ENCODE measurements at regions of chr6 and their contacts with region 1.

Region 1: GRCh38 chr6:26103770-26104456 is 16.7 kb downstream of the HFE start:
- DNase-seq: peak; percentile 96
- H3K4me3 Mint-ChIP-seq: peak overlapping the region; percentile 75
- H3K27ac Mint-ChIP-seq: peak overlapping the region; percentile 92
- H3K4me1 Mint-ChIP-seq: peaks cover 11% of the 10 kb centered on the region
- H3K27me3 Mint-ChIP-seq: no peaks in the 10 kb centered on the region
- CTCF ChIP-seq: peak; percentile 41

Region 2: DNA sequence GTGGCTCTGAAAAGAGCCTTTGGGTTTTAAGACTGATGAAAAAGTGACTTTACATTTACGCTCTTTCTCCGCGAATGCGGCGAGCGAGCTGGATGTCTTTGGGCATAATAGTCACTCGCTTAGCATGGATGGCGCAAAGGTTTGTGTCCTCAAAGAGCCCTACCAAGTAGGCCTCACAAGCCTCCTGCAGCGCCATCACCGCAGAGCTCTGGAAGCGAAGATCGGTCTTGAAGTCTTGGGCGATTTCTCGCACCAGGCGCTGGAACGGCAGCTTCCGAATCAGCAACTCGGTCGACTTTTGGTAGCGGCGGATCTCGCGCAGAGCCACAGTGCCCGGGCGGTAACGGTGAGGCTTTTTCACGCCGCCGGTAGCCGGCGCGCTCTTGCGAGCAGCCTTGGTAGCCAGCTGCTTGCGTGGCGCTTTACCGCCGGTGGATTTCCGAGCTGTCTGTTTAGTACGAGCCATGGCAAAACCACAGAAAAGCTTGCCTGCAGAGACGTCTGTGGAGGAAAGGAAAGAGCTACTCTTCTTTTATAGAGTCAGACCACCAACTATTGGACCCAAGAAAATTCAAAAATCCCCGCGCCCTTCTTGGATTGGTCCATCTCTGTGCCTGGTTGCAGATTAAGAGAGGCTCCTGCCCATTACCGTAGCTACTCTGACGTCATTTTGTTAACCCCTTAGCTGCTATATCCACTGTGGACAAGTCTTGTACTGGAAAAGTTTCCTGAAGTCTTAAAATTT is 72.1 kb before region 1 on chr6:
- CTCF ChIA-PET with region 1: interaction called, 6 read pairs
- POLR2A ChIA-PET with region 1: interaction called, 51 read pairs
- intact Hi-C with region 1: no loop called
- DNase-seq: peak; percentile 99
- H3K4me3 Mint-ChIP-seq: peak overlapping the region; percentile 81
- H3K27ac Mint-ChIP-seq: peak overlapping the region; percentile 97
- H3K4me1 Mint-ChIP-seq: peaks cover 25% of the 10 kb centered on the region
- H3K27me3 Mint-ChIP-seq: no peaks in the 10 kb centered on the region
- CTCF ChIP-seq: peak; percentile 12

Region 3: GRCh38 chr6:26054857-26055669 is 48.9 kb before region 1 on chr6:
- CTCF ChIA-PET with region 1: interaction called, 425 read pairs
- POLR2A ChIA-PET with region 1: interaction called, 235 read pairs
- intact Hi-C with region 1: no loop called
- DNase-seq: peak; percentile 96
- H3K4me3 Mint-ChIP-seq: peak overlapping the region; percentile 74
- H3K27ac Mint-ChIP-seq: peak overlapping the region; percentile 92
- H3K4me1 Mint-ChIP-seq: no peaks in the 10 kb centered on the region
- H3K27me3 Mint-ChIP-seq: no peaks in the 10 kb centered on the region
- CTCF ChIP-seq: no peak

Region 4: DNA sequence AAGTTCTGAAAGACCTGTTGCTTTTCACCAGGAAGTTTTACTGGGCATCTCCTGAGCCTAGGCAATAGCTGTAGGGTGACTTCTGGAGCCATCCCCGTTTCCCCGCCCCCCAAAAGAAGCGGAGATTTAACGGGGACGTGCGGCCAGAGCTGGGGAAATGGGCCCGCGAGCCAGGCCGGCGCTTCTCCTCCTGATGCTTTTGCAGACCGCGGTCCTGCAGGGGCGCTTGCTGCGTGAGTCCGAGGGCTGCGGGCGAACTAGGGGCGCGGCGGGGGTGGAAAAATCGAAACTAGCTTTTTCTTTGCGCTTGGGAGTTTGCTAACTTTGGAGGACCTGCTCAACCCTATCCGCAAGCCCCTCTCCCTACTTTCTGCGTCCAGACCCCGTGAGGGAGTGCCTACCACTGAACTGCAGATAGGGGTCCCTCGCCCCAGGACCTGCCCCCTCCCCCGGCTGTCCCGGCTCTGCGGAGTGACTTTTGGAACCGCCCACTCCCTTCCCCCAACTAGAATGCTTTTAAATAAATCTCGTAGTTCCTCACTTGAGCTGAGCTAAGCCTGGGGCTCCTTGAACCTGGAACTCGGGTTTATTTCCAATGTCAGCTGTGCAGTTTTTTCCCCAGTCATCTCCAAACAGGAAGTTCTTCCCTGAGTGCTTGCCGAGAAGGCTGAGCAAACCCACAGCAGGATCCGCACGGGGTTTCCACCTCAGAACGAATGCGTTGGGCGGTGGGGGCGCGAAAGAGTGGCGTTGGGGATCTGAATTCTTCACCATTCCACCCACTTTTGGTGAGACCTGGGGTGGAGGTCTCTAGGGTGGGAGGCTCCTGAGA is 16.4 kb before region 1 on chr6 and contains the start of gene HFE:
- CTCF ChIA-PET with region 1: interaction called, 81 read pairs
- POLR2A ChIA-PET with region 1: interaction called, 54 read pairs
- intact Hi-C with region 1: no loop called
- DNase-seq: peak; percentile 53
- H3K4me3 Mint-ChIP-seq: peak within 1 kb of the TSS; percentile 88
- H3K27ac Mint-ChIP-seq: peak within 1 kb of the TSS; percentile 92
- H3K4me1 Mint-ChIP-seq: peaks cover 10% of the 10 kb centered on the region
- H3K27me3 Mint-ChIP-seq: no peaks in the 10 kb centered on the region
- CTCF ChIP-seq: no peak
- total RNA-seq, gene HFE: 2.8 and 5.2 TPM in 2 replicates

Region 5: DNA sequence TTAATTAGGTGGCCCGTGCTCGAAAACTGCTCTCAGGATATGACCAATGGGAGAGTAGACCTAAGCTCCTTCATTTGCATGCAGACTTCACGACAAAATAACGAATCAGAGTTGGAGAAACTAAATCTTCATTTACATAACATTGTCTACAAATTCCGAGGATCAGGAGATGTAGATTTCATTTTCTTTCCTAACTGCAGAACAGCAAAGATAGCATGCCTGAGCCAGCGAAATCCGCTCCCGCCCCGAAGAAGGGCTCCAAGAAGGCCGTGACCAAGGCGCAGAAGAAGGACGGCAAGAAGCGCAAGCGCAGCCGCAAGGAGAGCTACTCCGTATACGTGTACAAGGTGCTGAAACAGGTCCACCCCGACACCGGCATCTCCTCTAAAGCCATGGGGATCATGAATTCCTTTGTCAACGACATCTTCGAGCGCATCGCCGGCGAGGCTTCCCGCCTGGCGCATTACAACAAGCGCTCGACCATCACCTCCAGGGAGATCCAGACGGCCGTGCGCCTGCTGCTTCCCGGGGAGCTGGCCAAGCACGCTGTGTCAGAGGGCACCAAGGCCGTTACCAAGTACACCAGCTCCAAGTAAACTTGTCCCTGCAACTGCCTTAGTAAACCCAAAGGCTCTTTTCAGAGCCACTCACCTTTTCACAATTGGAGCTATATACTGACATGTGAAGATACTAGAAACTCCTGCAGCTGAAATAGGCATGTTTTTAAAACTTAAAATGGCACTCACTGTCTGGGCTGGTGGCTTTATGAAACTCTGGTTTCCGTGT is 79.9 kb after region 1 on chr6:
- CTCF ChIA-PET with region 1: no interaction called
- POLR2A ChIA-PET with region 1: interaction called, 14 read pairs
- intact Hi-C with region 1: no loop called
- DNase-seq: peak; percentile 56
- H3K4me3 Mint-ChIP-seq: peak overlapping the region; percentile 79
- H3K27ac Mint-ChIP-seq: peak overlapping the region; percentile 84
- H3K4me1 Mint-ChIP-seq: peaks cover 27% of the 10 kb centered on the region
- H3K27me3 Mint-ChIP-seq: no peaks in the 10 kb centered on the region
- CTCF ChIP-seq: no peak